H1 (cell line): ENCODE measurements at regions of chr12 and their contacts with region 1.

Region 1: DNA sequence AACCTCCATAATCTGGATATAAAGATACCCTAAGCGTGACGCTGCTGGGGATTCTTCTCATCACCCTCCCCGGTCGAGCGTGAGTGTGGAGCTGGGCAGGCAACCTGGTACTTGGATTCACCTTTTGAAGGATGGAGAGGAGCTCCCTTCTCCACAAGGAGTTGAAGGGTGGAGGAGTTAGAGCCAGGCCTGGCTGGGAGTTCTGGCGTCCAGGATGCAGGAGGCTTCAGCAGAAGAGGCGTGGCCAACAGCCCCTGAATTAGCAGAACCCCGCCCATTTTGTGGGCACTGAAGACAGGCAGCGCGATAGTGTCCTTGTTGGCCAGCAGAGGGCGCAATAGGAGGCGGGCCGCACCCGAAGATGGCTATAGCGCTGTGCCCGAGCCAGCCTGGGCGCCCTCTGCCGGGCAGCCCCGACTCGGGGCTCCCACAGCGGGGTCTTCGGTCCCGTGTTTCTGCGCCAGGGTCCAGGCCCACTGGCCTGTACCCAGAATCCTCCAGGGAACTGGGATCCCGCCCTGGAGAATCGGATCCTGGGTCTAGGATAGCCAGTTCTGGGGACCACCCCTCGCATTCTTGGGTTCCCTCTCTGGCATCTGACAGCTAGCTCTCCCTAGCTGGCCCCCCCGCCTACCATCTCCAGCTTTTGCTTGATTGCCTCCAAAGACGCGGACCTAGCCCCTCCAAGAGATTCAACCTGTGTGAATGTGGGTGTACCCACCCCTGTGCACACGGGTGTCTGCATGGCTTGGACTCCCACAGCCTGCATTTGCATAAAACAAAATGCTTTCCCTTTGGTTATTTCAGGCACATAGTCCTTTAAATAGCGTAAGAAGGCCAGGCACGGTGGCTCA is 26.0 kb upstream of the SMUG1 start:
- DNase-seq: peak; percentile 78 to 96
- H3K4me3 ChIP-seq: no peak overlapping the region
- H3K27ac ChIP-seq: no peak overlapping the region
- H3K4me1 ChIP-seq: peaks cover 0 to 26% (median 17%) of the 10 kb centered on the region in 4 experiments; a peak in 6 of 7 replicates
- H3K27me3 ChIP-seq: peaks cover 1 to 42% (median 27%) of the 10 kb centered on the region in 4 experiments; a peak in 6 of 7 replicates
- CTCF ChIP-seq: peak; percentile 98 to 100 (median 100)
- EP300 ChIP-seq: no peak
- POLR2A ChIP-seq: no peak
- RAD21 ChIP-seq: peak; percentile 54 to 68

Region 2: GRCh38 chr12:53518381-53518780 is 696.4 kb before region 1 on chr12:
- CTCF ChIA-PET with region 1: no interaction called
- POLR2A ChIA-PET with region 1: no interaction called
- DNase-seq: no peak
- H3K4me3 ChIP-seq: no peak overlapping the region
- H3K27ac ChIP-seq: no peak overlapping the region
- H3K4me1 ChIP-seq: peaks cover 0 to 3% (median 0%) of the 10 kb centered on the region in 4 experiments; a peak in 1 of 7 replicates
- H3K27me3 ChIP-seq: no peaks in the 10 kb centered on the region
- CTCF ChIP-seq: no peak
- EP300 ChIP-seq: no peak
- POLR2A ChIP-seq: no peak
- RAD21 ChIP-seq: no peak

Region 3: GRCh38 chr12:53596920-53597363 is 617.8 kb before region 1 on chr12:
- CTCF ChIA-PET with region 1: no interaction called
- POLR2A ChIA-PET with region 1: no interaction called
- DNase-seq: no peak
- H3K4me3 ChIP-seq: no peak overlapping the region
- H3K27ac ChIP-seq: no peak overlapping the region
- H3K4me1 ChIP-seq: peaks cover 0 to under 1% (median 0%) of the 10 kb centered on the region in 4 experiments; a peak in 2 of 7 replicates
- H3K27me3 ChIP-seq: no peaks in the 10 kb centered on the region
- CTCF ChIP-seq: no peak
- EP300 ChIP-seq: no peak
- POLR2A ChIP-seq: no peak
- RAD21 ChIP-seq: no peak

Region 4: DNA sequence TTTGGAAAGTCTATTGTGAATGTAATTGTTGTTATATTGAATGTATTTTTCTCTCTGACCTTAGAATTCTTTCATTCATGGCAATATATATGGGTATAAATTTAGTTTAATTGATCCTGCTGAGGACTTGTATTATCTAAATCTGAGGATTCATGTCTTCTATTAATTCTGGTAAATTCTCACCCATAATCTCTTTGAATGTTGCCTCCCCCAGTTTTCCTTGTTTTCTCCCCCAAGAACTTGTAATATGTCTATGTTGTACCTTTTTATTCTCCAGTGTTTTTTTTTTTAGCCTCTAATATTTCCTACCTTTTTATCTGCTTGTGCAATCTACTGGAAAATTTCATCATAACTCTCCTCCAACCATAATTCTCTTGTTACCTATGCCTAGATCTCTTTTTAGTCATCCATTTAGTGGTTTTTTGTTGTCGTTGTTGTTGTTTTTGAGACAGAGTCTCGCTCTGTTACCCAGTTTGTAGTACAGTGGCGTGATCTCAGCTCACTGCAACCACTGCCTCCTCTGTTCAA is 297.6 kb before region 1 on chr12:
- CTCF ChIA-PET with region 1: no interaction called
- POLR2A ChIA-PET with region 1: no interaction called
- DNase-seq: no peak
- H3K4me3 ChIP-seq: no peak overlapping the region
- H3K27ac ChIP-seq: no peak overlapping the region
- H3K4me1 ChIP-seq: no peaks in the 10 kb centered on the region
- H3K27me3 ChIP-seq: peaks cover 0 to 5% (median 2%) of the 10 kb centered on the region in 4 experiments; a peak in 5 of 7 replicates
- CTCF ChIP-seq: no peak
- EP300 ChIP-seq: no peak
- POLR2A ChIP-seq: no peak
- RAD21 ChIP-seq: no peak

Region 5: DNA sequence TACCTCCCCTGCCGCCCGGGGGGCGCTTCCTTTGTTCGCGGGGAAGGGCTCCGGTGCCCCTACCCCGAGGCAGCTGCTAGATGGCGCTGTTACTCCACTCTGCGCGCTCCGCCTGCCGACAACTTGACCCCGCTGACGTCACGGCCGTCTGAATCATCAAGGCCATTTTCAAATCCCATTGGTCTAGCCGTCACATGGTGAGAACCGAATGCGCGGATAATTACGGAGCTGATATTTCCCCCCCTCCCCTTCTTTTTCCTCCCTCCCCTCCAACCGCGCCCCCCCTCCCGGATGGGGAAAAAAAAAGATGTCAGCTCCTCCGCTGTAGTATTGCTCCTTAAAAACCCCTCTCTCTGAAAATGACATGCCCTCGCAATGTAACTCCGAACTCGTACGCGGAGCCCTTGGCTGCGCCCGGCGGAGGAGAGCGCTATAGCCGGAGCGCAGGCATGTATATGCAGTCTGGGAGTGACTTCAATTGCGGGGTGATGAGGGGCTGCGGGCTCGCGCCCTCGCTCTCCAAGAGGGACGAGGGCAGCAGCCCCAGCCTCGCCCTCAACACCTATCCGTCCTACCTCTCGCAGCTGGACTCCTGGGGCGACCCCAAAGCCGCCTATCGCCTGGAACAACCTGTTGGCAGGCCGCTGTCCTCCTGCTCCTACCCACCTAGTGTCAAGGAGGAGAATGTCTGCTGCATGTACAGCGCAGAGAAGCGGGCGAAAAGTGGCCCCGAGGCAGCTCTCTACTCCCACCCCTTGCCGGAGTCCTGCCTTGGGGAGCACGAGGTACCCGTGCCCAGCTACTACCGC is 229.7 kb before region 1 on chr12 and contains the start of gene HOXC10:
- CTCF ChIA-PET with region 1: interaction called, 62 read pairs
- POLR2A ChIA-PET with region 1: no interaction called
- DNase-seq: peak in 1 of 2 experiments; percentile 93
- H3K4me3 ChIP-seq: peak within 1 kb of the TSS in 1 of 4 experiments; percentile 38; a peak in 2 of 8 replicates
- H3K27ac ChIP-seq: no peak within 1 kb of the TSS
- H3K4me1 ChIP-seq: peaks cover 0 to 6% (median 3%) of the 10 kb centered on the region in 4 experiments; a peak in 3 of 7 replicates
- H3K27me3 ChIP-seq: peaks cover 92 to 99% (median 97%) of the 10 kb centered on the region in 4 experiments
- CTCF ChIP-seq: peak; percentile 84 to 97 (median 89)
- EP300 ChIP-seq: 0 out of 3 replicates have a peak, but pooled peaks of 1 of the 2 experiments have one; percentile 18
- POLR2A ChIP-seq: no peak
- RAD21 ChIP-seq: peak; percentile 87 to 89
- total RNA-seq, gene HOXC10: not detected in 2 replicates

Region 6: DNA sequence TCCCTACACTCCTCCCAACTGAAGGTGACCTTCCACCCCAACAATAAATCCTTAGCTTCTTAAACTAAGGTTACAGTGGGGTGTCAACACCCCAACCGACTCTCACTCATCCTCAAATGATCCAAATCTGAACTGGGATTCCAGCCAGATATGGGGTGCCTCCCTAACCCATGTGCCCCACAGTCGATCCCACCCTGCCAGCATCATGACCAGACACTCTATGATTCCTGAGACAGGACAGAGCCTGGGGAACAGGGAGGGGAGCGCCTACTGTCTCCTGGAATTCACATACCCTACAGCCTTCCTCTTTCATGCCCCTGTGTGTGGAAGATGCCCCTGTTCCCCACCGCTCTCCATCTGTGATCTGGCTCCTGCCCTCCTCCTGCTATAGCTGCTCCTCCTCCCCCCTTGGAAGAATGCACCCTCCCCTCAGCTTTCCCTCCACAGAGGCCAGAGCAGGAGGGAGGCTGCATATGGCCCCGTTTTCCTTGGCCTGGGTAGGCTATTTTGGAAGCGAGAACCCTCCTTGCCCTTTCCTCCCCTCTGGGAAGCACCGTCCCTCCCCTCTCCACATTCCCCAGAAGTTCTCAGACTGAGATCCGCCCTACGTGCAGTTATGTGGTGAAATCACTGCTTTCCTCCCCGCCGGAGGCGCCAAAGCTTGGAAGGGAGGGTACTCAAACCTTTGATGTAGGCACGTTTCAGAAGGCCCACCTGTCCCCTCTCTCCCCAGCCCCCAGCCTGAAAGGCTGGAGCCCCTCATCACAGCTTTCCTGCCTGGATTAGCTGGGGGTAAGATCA is 74.0 kb before region 1 on chr12:
- CTCF ChIA-PET with region 1: interaction called, 34 read pairs
- POLR2A ChIA-PET with region 1: no interaction called
- DNase-seq: no peak
- H3K4me3 ChIP-seq: no peak overlapping the region
- H3K27ac ChIP-seq: no peak overlapping the region
- H3K4me1 ChIP-seq: peaks cover 0 to 9% (median 2%) of the 10 kb centered on the region in 4 experiments; a peak in 3 of 7 replicates
- H3K27me3 ChIP-seq: peaks cover under 1 to 57% (median 26%) of the 10 kb centered on the region in 4 experiments
- CTCF ChIP-seq: no peak
- EP300 ChIP-seq: no peak
- POLR2A ChIP-seq: no peak
- RAD21 ChIP-seq: no peak

Region 7: DNA sequence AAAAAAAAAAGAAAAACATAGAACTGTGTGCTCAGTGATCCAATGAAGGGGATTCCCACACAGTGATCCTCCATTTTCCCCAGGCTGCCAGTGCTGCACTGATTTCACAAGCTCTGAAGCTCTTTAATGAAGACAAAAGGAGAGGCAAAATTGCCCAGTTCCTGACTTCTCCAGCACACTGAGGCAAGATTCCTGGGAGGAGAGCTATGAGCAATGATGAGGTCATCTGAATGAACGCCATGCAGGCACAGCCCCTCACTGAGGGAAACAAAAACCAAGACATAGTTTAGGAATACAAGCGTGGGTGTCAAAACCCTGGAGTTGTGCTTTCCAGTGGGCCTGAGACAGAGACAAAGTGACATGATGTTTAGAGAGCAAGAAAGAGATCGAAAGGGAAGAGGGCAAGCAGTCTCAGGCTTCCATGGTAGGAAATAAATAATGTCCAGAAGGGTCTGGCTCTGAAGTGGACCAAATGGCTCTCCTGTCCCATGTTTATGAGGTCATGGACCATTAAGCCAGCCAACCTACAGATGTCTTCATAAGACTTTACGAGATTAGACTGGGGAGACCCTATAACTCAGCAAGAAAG is 14.9 kb after region 1 on chr12:
- CTCF ChIA-PET with region 1: interaction called, 12 read pairs
- POLR2A ChIA-PET with region 1: interaction called, 7 read pairs
- DNase-seq: no peak
- H3K4me3 ChIP-seq: no peak overlapping the region
- H3K27ac ChIP-seq: 0 out of 2 replicates have a peak overlapping the region, but pooled peaks have one; percentile 0
- H3K4me1 ChIP-seq: no peaks in the 10 kb centered on the region
- H3K27me3 ChIP-seq: no peaks in the 10 kb centered on the region
- CTCF ChIP-seq: no peak
- EP300 ChIP-seq: no peak
- POLR2A ChIP-seq: no peak
- RAD21 ChIP-seq: no peak

Region 8: DNA sequence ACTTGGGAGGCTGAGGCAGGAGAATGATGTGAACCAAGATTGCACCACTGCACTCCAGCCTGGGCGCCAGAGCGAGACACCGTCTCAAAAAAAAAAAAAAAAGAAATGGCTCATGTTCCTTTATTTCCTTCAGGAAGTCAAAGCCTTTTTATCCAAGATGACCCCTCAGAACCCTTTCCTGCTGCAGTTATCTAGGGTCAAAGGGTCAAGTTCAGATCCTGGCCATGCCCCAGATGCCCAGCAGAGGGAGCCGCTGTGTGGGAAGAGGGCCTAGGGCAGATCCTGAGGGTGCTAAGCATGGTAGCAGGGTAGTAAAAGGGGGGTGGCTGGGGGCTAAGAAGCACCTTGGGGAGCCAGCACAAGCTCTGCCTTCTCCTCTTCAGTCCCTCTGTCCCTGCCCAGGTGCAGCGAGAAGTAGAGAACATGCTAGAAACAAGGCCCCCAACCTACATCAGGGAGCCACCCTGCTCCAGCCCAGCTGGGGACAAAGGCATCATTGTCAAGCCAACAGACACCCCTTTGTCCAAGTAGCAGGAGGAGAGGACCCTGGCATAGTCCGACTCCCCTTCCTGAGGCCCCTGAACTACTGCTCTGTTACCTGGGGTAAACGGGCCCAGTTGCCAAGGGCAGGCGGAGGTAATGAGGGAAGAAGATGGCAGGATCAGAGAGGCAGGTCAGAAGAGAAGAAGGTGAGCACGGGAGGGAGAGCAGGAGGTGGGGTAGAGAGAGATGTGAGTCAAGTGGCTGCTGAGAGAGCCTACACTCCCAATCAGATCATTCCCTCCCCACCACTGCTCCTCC is 79.6 kb after region 1 on chr12:
- CTCF ChIA-PET with region 1: interaction called, 16 read pairs
- POLR2A ChIA-PET with region 1: no interaction called
- DNase-seq: peak in 1 of 2 experiments; percentile 94
- H3K4me3 ChIP-seq: no peak overlapping the region
- H3K27ac ChIP-seq: no peak overlapping the region
- H3K4me1 ChIP-seq: peaks cover 0 to 2% (median 0%) of the 10 kb centered on the region in 4 experiments; a peak in 1 of 7 replicates
- H3K27me3 ChIP-seq: peaks cover 0 to 4% (median 0%) of the 10 kb centered on the region in 4 experiments; a peak in 1 of 7 replicates
- CTCF ChIP-seq: peak; percentile 91 to 95 (median 93)
- EP300 ChIP-seq: no peak
- POLR2A ChIP-seq: no peak
- RAD21 ChIP-seq: peak; percentile 81 to 92

Region 9: DNA sequence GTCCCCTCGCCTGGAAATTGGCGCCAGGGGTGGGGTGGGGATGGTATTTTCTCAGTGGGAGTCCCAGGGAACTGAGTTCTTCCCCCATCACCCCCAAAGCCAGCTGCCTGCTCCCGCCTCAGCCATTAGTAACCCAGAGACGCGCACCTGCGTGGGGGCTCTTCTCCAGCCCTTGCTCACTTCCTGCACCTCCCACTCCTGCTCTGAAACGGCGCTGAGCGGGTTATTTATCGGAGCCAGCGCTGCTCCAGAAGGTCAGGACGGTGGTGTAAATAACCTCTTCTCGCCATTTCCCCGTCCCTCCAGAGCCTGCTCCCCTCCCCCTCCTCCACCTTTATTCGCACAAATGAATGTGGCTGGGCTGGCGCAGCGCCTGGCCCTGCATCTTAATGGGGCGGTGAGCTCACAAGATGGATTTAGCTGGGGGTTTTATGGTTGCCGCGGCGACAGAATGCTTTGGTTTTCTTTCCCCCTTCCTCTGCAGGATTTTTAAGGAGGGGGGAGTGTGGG is 137.3 kb after region 1 on chr12:
- CTCF ChIA-PET with region 1: interaction called, 21 read pairs
- POLR2A ChIA-PET with region 1: interaction called, 8 read pairs
- DNase-seq: peak; percentile 50 to 70
- H3K4me3 ChIP-seq: peak overlapping the region; percentile 44 to 64 (median 62)
- H3K27ac ChIP-seq: peak overlapping the region; percentile 61
- H3K4me1 ChIP-seq: peaks cover 27 to 69% (median 33%) of the 10 kb centered on the region in 4 experiments
- H3K27me3 ChIP-seq: peaks cover 0 to 9% (median 4%) of the 10 kb centered on the region in 4 experiments; a peak in 3 of 7 replicates
- CTCF ChIP-seq: no peak
- EP300 ChIP-seq: no peak
- POLR2A ChIP-seq: peak in 1 of 2 experiments; percentile 41; a peak in 1 of 3 replicates
- RAD21 ChIP-seq: no peak

Region 10: GRCh38 chr12:54379401-54380201 is 164.8 kb after region 1 on chr12:
- CTCF ChIA-PET with region 1: interaction called, 15 read pairs
- POLR2A ChIA-PET with region 1: interaction called, 7 read pairs
- DNase-seq: peak in 1 of 2 experiments; percentile 99
- H3K4me3 ChIP-seq: peak overlapping the region; percentile 30 to 54 (median 38); a peak in 6 of 8 replicates
- H3K27ac ChIP-seq: no peak overlapping the region
- H3K4me1 ChIP-seq: peaks cover 3 to 17% (median 12%) of the 10 kb centered on the region in 4 experiments
- H3K27me3 ChIP-seq: peaks cover 0 to 3% (median 1%) of the 10 kb centered on the region in 4 experiments; a peak in 2 of 7 replicates
- CTCF ChIP-seq: peak; percentile 100
- EP300 ChIP-seq: no peak
- POLR2A ChIP-seq: no peak
- RAD21 ChIP-seq: peak; percentile 84 to 90